Transverse colon (tissue), 4 donors: ENCODE measurements at regions of chr3 and their contacts with region 1.

Region 1: GRCh38 chr3:58188173-58188564 is 22.6 kb downstream of the DNASE1L3 start:
- DNase-seq: no peak
- H3K4me3 ChIP-seq: no peak overlapping the region
- H3K27ac ChIP-seq: no peak overlapping the region
- H3K4me1 ChIP-seq: peaks cover 0 to 7% (median 0%) of the 10 kb centered on the region in 4 donors
- H3K27me3 ChIP-seq: no peaks in the 10 kb centered on the region
- CTCF ChIP-seq: no peak
- EP300 ChIP-seq: no peak
- POLR2A ChIP-seq: no peak

Region 2: GRCh38 chr3:57918123-57918837 is 269.9 kb before region 1 on chr3:
- in situ Hi-C with region 1: no loop called
- intact Hi-C with region 1: no loop called
- DNase-seq: no peak
- H3K4me3 ChIP-seq: no peak overlapping the region
- H3K27ac ChIP-seq: peak overlapping the region; percentile 32 to 56 (median 45)
- H3K4me1 ChIP-seq: peaks cover 0 to 27% (median 0%) of the 10 kb centered on the region in 4 donors
- H3K27me3 ChIP-seq: no peaks in the 10 kb centered on the region
- CTCF ChIP-seq: no peak
- EP300 ChIP-seq: no peak
- POLR2A ChIP-seq: no peak

Region 3: GRCh38 chr3:58135712-58136543 is 52.2 kb before region 1 on chr3:
- in situ Hi-C with region 1: no loop called
- intact Hi-C with region 1: no loop called
- DNase-seq: no peak
- H3K4me3 ChIP-seq: no peak overlapping the region
- H3K27ac ChIP-seq: peak overlapping the region in 3 of 4 donors; percentile 32 to 60 (median 39)
- H3K4me1 ChIP-seq: no peaks in the 10 kb centered on the region
- H3K27me3 ChIP-seq: no peaks in the 10 kb centered on the region
- CTCF ChIP-seq: peak in 4 of 5 experiments; percentile 22 to 34 (median 27)
- EP300 ChIP-seq: no peak
- POLR2A ChIP-seq: no peak

Region 4: GRCh38 chr3:58167431-58168351 is 20.5 kb before region 1 on chr3:
- in situ Hi-C with region 1: no loop called
- intact Hi-C with region 1: no loop called
- DNase-seq: peak; percentile 74
- H3K4me3 ChIP-seq: no peak overlapping the region
- H3K27ac ChIP-seq: peak overlapping the region; percentile 1 to 86 (median 52)
- H3K4me1 ChIP-seq: peaks cover 0 to 20% (median 17%) of the 10 kb centered on the region in 4 donors
- H3K27me3 ChIP-seq: no peaks in the 10 kb centered on the region
- CTCF ChIP-seq: peak; percentile 78 to 91 (median 86)
- EP300 ChIP-seq: no peak
- POLR2A ChIP-seq: no peak

Region 5: GRCh38 chr3:58526515-58526957 is 338.4 kb after region 1 on chr3:
- in situ Hi-C with region 1: loop called in 1 of 4 experiments (anchors 10 kb)
- intact Hi-C with region 1: no loop called
- DNase-seq: no peak
- H3K4me3 ChIP-seq: no peak overlapping the region
- H3K27ac ChIP-seq: no peak overlapping the region
- H3K4me1 ChIP-seq: peaks cover 0 to 6% (median under 1%) of the 10 kb centered on the region in 4 donors
- H3K27me3 ChIP-seq: no peaks in the 10 kb centered on the region
- CTCF ChIP-seq: no peak
- EP300 ChIP-seq: no peak
- POLR2A ChIP-seq: no peak